Activated T-helper 1 cell treated with anti-CD3 and anti-CD28 coated beads, Interleukin-12 subunit alpha, Interleukin-12 subunit beta, Interleukin-2, Interleukin-4 antibody, amounts not matched to agents 30 ng/mL and 10 ng/mL and 1 ng/mL, durations not matched to agents 14 hours and 24 hours and 36 hours (primary cell): ENCODE measurements at regions of chr19 and their contacts with region 1.

Region 1: DNA sequence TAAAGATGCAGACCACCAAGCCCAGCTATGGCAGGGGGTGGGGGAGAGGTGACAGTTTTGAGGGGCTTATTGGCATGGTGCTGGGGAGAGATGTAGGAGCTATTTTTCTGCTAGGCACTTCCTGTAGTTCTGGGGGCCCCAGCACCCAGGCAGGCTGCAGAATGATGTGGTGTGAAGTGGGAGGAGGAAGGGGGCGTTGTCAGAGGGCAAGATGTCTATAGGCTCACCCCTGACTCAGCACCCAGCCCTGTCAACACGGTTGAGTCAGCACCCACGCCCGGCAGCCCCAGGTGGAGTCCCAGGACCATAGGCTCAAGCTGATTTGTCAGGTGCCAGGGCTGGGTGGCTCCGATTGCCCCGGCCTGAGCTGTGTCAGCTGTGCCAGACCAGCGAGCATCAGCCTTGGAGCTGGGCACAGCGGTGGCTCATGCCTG is 5.8 kb downstream of the KLF2 start:
- DNase-seq: peak; percentile 89
- H3K4me3 Mint-ChIP-seq: peak overlapping the region; percentile 93
- H3K27ac Mint-ChIP-seq: peak overlapping the region; percentile 79
- H3K4me1 Mint-ChIP-seq: peaks cover 67% of the 10 kb centered on the region
- H3K27me3 Mint-ChIP-seq: peaks cover 9% of the 10 kb centered on the region

Region 2: GRCh38 chr19:15836595-15837337 is 493.6 kb before region 1 on chr19:
- intact Hi-C with region 1: loop called (anchors 1 kb)
- DNase-seq: peak; percentile 94
- H3K4me3 Mint-ChIP-seq: peak overlapping the region; percentile 92
- H3K27ac Mint-ChIP-seq: peak overlapping the region; percentile 99
- H3K4me1 Mint-ChIP-seq: peaks cover 16% of the 10 kb centered on the region
- H3K27me3 Mint-ChIP-seq: no peaks in the 10 kb centered on the region